ENCODE measurements at regions of chr11 and their contacts with region 1.

Region 1: DNA sequence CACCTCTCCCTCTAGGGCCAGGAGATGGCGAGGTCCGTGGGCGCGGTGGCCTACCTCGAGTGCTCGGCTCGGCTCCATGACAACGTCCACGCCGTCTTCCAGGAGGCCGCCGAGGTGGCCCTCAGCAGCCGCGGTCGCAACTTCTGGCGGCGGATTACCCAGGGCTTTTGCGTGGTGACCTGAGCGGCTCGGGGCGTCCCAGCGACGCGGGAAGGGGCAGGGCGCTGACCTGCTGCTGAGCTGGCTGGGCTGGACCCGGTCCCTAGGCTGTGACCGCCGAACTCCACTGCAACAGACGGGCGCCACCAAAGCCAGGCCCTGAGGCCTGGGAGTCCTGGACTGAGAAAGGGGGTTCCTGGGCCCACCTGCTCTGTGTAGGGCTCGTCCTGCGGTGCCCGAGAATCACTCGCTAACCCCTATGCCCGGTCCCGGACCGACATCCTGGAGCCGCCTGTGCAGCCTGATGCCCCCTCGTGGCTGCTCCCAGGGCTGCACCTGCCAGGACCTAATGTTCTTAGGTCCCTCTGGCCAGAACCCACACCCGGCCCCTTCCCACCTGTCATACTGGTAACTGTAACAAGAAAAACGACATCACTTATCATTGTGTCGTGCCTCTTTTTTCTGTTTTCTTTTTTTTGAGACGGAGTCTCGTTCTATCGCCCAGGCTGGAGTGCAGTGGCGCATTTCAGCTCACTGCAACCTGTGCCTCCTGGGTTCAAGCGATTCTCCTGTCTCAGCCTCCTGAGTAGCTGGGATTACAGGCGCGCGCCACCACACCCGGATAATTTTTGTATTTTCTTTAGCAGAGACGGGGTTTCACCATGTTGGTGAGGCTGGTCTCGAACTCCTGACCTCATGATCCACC is 15.0 kb downstream of the RHOD start:
- DNase-seq: no peak
- ATAC-seq: peak; percentile 87
- H3K4me3 ChIP-seq: no peak overlapping the region
- H3K27ac ChIP-seq: no peak overlapping the region
- H3K4me1 ChIP-seq: no peaks in the 10 kb centered on the region
- H3K27me3 ChIP-seq: no peaks in the 10 kb centered on the region
- CTCF ChIP-seq: peak; percentile 94

Region 2: DNA sequence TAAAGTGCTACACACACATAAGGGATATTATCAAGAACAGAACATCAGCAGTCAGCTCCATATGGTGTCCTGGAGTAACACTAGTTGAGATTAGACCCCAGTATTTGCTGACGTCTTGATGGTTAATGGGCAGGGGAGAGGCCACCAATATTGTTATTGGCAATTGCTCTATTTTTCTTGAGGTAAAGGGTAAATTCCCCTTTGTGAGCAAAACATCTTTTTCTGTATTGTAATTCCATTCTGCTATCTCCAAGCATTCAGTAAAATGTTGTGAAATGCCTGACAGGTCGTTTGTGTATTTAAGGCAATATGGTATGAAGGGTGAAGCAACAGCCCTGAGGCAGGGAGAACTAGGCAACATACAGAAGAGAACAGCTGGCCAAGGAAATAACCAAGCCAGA is 135.3 kb before region 1 on chr11:
- CTCF ChIA-PET with region 1: no interaction called
- POLR2A ChIA-PET with region 1: interaction called, 12 read pairs
- in situ Hi-C with region 1: no loop called
- intact Hi-C with region 1: no loop called
- DNase-seq: no peak
- ATAC-seq: no peak
- H3K4me3 ChIP-seq: no peak overlapping the region
- H3K27ac ChIP-seq: no peak overlapping the region
- H3K4me1 ChIP-seq: no peaks in the 10 kb centered on the region
- H3K27me3 ChIP-seq: no peaks in the 10 kb centered on the region
- CTCF ChIP-seq: no peak

Region 3: GRCh38 chr11:67039989-67040546 is 31.6 kb before region 1 on chr11:
- CTCF ChIA-PET with region 1: interaction called, 11 read pairs
- POLR2A ChIA-PET with region 1: no interaction called
- in situ Hi-C with region 1: no loop called
- intact Hi-C with region 1: no loop called
- DNase-seq: no peak
- ATAC-seq: no peak
- H3K4me3 ChIP-seq: no peak overlapping the region
- H3K27ac ChIP-seq: no peak overlapping the region
- H3K4me1 ChIP-seq: no peaks in the 10 kb centered on the region; the same call in 1 of the 2 replicates
- H3K27me3 ChIP-seq: no peaks in the 10 kb centered on the region
- CTCF ChIP-seq: no peak

Region 4: GRCh38 chr11:67052891-67053290 is 18.8 kb before region 1 on chr11:
- CTCF ChIA-PET with region 1: interaction called, 11 read pairs
- POLR2A ChIA-PET with region 1: no interaction called
- in situ Hi-C with region 1: no loop called
- intact Hi-C with region 1: no loop called
- DNase-seq: no peak
- ATAC-seq: no peak
- H3K4me3 ChIP-seq: no peak overlapping the region
- H3K27ac ChIP-seq: no peak overlapping the region
- H3K4me1 ChIP-seq: peaks cover 35% of the 10 kb centered on the region
- H3K27me3 ChIP-seq: no peaks in the 10 kb centered on the region
- CTCF ChIP-seq: no peak

Region 5: GRCh38 chr11:67442504-67443405 is 371.1 kb after region 1 on chr11:
- CTCF ChIA-PET with region 1: no interaction called
- POLR2A ChIA-PET with region 1: no interaction called
- in situ Hi-C with region 1: no loop called
- intact Hi-C with region 1: no loop called
- DNase-seq: no peak
- ATAC-seq: peak; percentile 16
- H3K4me3 ChIP-seq: peak overlapping the region; percentile 78 to 87
- H3K27ac ChIP-seq: peak overlapping the region; percentile 87
- H3K4me1 ChIP-seq: peaks cover 46% of the 10 kb centered on the region
- H3K27me3 ChIP-seq: no peaks in the 10 kb centered on the region
- CTCF ChIP-seq: no peak